ENCODE measurements at regions of chr1 and their contacts with region 1.

Region 1: DNA sequence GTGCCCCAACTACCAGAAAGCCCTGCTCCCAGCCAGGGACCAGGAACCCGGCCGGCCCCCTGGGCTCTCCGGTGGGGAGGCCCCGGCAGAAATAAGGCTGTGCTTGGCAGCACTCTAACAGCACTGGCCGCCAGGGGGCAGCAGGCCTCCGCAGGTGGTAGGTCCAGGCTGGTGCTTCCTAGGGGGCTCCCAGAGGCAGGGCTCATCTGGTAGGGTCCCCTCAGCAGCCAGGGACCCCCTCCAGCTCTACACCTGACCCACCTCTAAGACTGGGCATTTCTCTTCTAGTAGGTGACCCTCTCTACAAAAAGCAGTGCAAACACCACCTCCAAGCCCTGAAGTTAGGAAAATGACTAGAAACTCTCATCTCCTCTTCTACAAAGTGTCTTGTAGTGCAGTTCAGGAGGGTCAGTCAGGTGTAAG is 85.6 kb downstream of the STUM start:
- DNase-seq: peak; percentile 82
- H3K4me3 Mint-ChIP-seq: no peak overlapping the region
- H3K27ac Mint-ChIP-seq: no peak overlapping the region
- H3K4me1 Mint-ChIP-seq: peaks cover 20% of the 10 kb centered on the region
- H3K27me3 Mint-ChIP-seq: no peaks in the 10 kb centered on the region
- CTCF ChIP-seq: peak; percentile 100

Region 2: DNA sequence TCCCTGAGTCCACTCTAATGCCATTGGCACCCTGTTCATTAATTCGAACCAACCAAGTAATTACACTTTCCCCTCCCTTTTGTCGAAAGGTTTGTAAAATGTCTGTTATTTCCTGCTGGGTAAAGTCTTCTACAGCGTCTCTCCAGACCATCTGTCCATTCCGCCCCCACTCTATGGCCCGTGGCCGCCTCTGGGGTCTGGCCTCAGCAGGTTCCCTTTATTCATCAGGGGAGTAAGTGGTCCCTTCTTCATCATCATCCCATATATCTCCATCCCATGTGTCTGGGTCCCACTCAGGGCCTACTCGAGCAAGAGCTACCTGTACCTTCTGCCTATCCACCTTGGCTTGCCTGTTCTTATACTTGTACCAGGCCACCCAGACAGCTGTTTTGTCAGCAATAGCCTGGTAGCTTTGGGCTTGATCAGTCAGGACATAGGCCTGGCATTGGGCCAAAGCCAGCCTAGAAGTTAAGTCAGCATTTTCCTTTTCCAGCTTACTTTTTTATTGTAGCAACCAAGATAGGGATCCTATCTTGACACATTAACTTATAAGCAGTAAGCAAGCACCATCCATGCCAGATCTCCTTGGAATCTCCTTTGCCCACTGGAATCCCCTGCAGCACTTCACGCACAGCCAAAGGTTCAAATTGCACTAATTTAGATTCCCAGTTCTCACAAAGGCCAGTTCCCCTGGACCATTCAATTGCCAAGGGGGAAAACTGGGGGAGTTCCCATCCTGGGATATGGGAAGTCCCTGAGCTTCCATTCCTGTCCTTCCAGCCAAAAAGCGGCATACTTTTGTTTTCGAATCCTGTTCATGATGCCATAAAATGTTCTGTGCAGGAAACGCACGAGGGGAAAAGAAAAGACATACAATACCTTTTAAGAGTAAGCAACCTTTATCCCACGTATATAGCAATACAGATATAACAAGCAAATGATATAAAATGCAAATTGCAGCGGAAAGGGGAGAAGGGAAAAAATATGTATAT is 92.2 kb before region 1 on chr1:
- CTCF ChIA-PET with region 1: interaction called, 24 read pairs
- POLR2A ChIA-PET with region 1: no interaction called
- intact Hi-C with region 1: loop called (anchors 1 kb)
- DNase-seq: peak; percentile 50
- H3K4me3 Mint-ChIP-seq: no peak overlapping the region
- H3K27ac Mint-ChIP-seq: no peak overlapping the region
- H3K4me1 Mint-ChIP-seq: peaks cover 11% of the 10 kb centered on the region
- H3K27me3 Mint-ChIP-seq: peaks cover 17% of the 10 kb centered on the region
- CTCF ChIP-seq: no peak

Region 3: DNA sequence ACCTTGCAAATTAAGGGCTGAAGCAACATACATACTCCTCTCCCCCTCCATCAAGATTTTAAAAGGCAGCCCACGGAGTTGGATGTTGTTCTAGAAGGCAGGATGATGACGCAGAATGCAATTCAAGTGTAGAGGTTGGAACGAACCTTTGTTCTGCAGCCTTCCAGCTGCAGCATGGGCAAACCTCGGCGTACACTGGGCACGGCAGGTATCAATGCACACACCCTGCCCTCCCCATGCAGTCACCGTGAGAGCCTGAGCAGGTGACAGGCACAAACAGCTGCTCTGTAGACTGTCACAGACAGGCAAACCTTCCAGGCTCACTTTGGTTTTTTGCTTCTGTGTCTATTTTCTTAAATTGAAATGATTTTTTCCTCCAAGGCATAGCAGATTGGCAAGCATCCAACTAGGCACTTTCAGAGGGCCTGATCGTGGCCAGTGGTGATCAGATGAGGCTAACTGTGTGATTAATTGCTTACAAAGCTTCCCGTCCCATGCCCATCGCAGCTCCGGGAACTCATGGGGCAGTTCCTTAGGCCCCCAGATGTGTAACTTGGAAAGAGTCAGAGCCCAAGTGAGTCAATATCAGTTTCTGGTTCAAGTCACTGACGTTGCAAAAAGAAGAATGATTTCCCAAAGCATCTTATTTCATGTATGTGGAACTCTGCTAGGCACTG is 22.6 kb after region 1 on chr1:
- CTCF ChIA-PET with region 1: interaction called, 57 read pairs
- POLR2A ChIA-PET with region 1: interaction called, 20 read pairs
- intact Hi-C with region 1: no loop called
- DNase-seq: peak; percentile 98
- H3K4me3 Mint-ChIP-seq: peak overlapping the region; percentile 45
- H3K27ac Mint-ChIP-seq: peak overlapping the region; percentile 75
- H3K4me1 Mint-ChIP-seq: peaks cover 32% of the 10 kb centered on the region
- H3K27me3 Mint-ChIP-seq: no peaks in the 10 kb centered on the region
- CTCF ChIP-seq: no peak

Region 4: DNA sequence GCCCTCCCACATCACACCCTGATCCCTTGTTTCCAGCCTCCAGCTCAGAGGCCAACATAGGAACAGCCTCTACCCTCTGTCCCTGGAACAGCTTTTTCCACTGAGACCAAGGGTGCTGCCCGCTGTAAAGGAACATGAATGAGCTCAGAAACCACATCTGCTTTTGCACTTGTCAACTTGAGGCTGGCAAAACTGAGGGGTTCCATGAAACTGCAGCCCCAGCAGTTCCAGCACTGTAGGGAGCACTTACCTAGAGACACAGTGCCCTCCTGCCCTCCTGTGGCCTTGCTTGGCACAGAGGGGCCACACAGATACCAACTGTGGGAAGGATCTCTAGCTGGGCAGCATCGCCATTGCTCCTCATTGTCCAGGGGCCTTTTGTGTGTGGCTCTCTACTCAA is 53.2 kb after region 1 on chr1:
- CTCF ChIA-PET with region 1: interaction called, 27 read pairs
- POLR2A ChIA-PET with region 1: interaction called, 3 read pairs
- intact Hi-C with region 1: no loop called
- DNase-seq: peak; percentile 39
- H3K4me3 Mint-ChIP-seq: no peak overlapping the region
- H3K27ac Mint-ChIP-seq: no peak overlapping the region
- H3K4me1 Mint-ChIP-seq: peaks cover 5% of the 10 kb centered on the region
- H3K27me3 Mint-ChIP-seq: no peaks in the 10 kb centered on the region
- CTCF ChIP-seq: peak; percentile 19

Region 5: DNA sequence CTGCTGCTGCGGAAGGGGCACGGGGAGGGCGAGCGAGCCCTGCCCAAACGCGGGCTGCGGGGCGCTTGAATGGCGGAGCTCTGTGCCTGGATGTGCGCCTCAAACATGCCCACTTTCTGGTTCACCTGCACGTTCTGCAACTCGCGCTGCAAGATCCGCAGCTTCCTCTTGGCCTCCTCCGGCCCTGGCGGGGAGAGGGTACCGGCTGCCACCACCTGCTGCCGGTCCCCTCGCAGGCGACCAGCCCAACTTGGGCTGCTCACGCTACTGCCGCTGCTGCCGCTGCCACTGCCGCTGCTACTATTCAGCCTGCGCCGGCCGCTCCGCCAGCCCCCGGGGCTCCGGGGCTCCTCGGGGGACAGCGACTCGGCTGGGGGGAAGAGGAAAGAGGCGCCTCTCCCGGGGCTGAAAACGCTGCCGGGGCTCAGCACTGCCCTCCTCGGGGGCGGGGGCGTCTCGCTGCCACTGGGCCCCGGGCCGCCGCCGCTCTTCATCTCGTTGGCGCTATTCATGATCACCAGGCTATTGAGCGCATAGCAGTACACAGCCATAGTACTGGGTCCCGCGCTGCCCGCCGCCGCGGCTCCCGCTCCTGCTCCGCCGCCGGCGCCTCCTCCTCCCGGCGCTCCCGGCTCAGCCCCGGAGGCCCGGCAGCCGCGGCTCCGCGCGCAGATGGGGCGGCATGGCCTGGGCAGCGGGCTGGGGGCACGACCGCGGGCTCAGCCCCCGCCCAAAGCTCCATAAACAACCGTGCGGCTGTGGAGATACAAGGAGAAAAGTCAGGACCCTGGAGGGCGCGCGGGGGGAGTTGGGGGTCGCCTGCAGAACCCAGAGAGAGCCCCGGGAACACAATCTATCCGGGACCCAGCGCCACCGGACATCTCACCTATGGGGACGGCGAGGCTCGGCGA is 103.0 kb after region 1 on chr1:
- CTCF ChIA-PET with region 1: interaction called, 3 read pairs
- POLR2A ChIA-PET with region 1: no interaction called
- intact Hi-C with region 1: loop called (anchors 1 kb)
- DNase-seq: no peak
- H3K4me3 Mint-ChIP-seq: peak overlapping the region; percentile 82
- H3K27ac Mint-ChIP-seq: peak overlapping the region; percentile 33
- H3K4me1 Mint-ChIP-seq: peaks cover 28% of the 10 kb centered on the region
- H3K27me3 Mint-ChIP-seq: no peaks in the 10 kb centered on the region
- CTCF ChIP-seq: no peak

Region 6: GRCh38 chr1:226827968-226828513 is 193.9 kb after region 1 on chr1:
- CTCF ChIA-PET with region 1: interaction called, 342 read pairs
- POLR2A ChIA-PET with region 1: interaction called, 5 read pairs
- intact Hi-C with region 1: loop called (anchors 1 kb)
- DNase-seq: peak; percentile 100
- H3K4me3 Mint-ChIP-seq: no peak overlapping the region
- H3K27ac Mint-ChIP-seq: no peak overlapping the region
- H3K4me1 Mint-ChIP-seq: no peaks in the 10 kb centered on the region
- H3K27me3 Mint-ChIP-seq: no peaks in the 10 kb centered on the region
- CTCF ChIP-seq: peak; percentile 100

Measured in MCF 10A (cell line).